ENCODE measurements at regions of chr1 and their contacts with region 1.

Region 1: DNA sequence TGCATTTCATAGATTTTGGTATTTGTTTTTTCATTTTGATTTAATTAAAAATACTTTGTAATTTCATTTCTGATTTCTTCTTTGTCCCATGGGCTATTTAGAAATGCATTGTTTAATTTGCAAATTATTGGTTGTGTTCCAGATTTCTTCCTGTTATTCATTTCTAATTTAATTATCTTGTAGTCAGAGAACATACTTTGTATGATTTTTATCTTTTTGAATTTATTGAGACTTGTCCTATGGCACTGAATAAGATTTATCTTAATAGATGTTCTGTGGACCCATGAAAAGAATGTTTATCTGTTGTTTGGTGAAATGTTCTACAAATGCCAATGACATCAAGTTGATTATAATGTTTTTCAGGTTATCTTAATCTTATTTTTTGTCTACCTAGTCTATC is 16.1 kb upstream of the TRABD2B start:
- DNase-seq: no peak
- ATAC-seq: no peak
- H3K4me3 ChIP-seq: no peak overlapping the region
- H3K27ac ChIP-seq: no peak overlapping the region
- H3K4me1 ChIP-seq: no peaks in the 10 kb centered on the region
- H3K27me3 ChIP-seq: peaks cover 41% of the 10 kb centered on the region
- CTCF ChIP-seq: no peak
- POLR2A ChIP-seq: no peak
- RAD21 ChIP-seq: no peak

Region 2: DNA sequence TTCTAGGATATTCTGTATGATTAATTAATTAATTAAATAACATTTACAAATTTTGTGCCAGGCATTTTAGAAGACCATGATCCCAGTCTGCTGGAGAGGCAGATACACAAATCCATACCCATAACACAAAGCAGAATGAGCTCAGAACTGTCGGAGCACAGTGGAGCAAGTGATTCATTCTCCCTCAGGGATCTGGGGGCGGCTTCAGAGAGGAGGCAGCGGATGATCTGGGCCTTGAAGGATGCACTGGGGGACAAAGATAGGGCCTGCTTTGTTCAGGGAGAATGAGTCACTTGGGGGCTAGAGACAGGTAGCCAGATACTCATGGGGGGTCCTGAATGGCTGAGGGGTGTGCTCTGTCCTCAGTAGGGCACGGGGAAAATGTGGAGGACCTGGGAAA is 34.8 kb after region 1 on chr1:
- CTCF ChIA-PET with region 1: no interaction called
- POLR2A ChIA-PET with region 1: no interaction called
- RAD21 ChIA-PET with region 1: no interaction called
- intact Hi-C with region 1: loop called (anchors 5 kb)
- DNase-seq: no peak
- ATAC-seq: peak; percentile 32; the same call in 1 of the 2 replicates
- H3K4me3 ChIP-seq: no peak overlapping the region
- H3K27ac ChIP-seq: no peak overlapping the region
- H3K4me1 ChIP-seq: peaks cover 10 to 54% of the 10 kb centered on the region in 2 experiments; a peak in 3 of 4 replicates
- H3K27me3 ChIP-seq: no peaks in the 10 kb centered on the region
- CTCF ChIP-seq: no peak
- POLR2A ChIP-seq: no peak
- RAD21 ChIP-seq: no peak

Region 3: DNA sequence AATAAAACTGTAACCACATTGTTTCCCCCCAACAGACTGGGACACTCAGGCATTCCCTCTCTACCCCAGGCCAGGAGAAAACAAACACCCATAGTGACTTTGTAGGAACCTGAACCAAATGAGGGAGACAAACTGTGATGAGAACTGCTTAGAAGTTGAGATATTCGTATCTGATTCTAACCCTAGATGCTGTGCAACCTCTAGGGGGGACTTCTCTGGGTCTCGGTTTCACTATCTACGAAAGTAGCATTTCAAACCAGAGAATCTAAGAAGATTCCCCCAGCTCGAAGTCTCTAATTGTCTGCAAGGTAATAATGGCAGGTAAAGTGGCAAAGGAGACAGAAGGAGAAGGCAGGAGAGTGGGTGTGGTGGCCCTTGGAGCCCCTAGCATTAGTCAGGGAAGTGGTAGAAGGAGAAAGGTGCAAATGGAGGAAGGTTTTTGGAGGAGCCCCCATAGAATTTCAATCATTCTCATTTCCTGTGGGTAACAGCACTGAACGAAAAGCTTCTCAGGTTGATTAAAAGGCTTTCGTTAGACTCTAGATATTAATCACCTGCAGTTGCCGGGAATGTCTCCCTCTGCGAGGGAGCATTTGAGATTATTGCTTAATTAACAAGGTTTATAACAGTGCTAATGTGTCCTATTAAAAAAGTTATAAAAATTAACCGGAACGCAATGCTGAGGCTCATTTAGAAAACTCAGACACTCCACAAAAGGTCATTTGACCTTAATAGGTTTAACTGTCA is 717.1 kb after region 1 on chr1:
- CTCF ChIA-PET with region 1: no interaction called
- POLR2A ChIA-PET with region 1: no interaction called
- RAD21 ChIA-PET with region 1: no interaction called
- intact Hi-C with region 1: no loop called
- DNase-seq: no peak
- ATAC-seq: no peak
- H3K4me3 ChIP-seq: no peak overlapping the region
- H3K27ac ChIP-seq: no peak overlapping the region
- H3K4me1 ChIP-seq: no peaks in the 10 kb centered on the region
- H3K27me3 ChIP-seq: peaks cover 39% of the 10 kb centered on the region
- CTCF ChIP-seq: no peak
- POLR2A ChIP-seq: no peak
- RAD21 ChIP-seq: no peak